Heart left ventricle (tissue), 16 donors: ENCODE measurements at regions of chr12 and their contacts with region 1.

Region 1: DNA sequence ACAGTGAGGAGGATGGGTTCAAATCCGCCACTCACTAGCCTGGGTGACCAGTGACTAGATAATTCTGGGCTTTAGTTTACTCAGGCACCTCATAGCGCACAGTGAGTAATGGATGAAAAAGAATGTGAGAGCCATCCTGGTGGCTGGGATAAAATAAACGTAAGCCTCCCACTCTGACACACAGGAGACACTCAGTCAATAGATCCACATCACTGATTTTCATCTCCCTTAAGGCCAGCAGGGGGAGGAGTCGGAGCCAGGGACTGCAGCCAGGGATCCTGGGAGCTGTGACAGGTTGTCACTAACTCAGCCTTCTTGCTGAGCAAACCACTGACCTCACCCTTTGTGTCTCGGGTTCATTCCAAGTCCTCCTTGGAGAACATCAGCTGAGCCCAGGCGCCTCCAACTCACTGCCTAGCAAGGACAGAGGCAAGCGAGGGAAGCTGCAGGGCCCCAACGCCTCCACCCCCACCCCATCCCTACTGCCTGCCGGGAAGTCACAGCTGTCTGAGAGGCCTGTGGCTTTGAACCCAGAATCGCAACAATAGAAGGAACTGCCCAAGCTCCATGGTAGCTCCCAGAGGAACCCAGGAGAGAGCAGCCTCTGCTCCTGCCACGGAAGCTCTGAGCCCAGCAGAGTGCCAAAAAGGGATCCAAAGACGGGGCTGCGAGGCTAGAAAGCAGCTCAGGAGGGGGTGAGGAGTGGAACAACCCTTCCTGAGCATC is 30.7 kb downstream of the PXN start:
- DNase-seq: peak; percentile 85 to 95 (median 90)
- ATAC-seq: peak; percentile 59 to 83 (median 74)
- H3K4me3 ChIP-seq: peak overlapping the region in 8 of 12 donors; percentile 0 to 18 (median 13)
- H3K27ac ChIP-seq: peak overlapping the region; percentile 81 to 97 (median 92)
- H3K4me1 ChIP-seq: peaks cover 62 to 100% (median 100%) of the 10 kb centered on the region in 12 donors
- H3K27me3 ChIP-seq: no peaks in the 10 kb centered on the region
- CTCF ChIP-seq: peak; percentile 22 to 66 (median 46)
- POLR2A ChIP-seq: peak in 1 of 2 donors; percentile 15

Region 2: DNA sequence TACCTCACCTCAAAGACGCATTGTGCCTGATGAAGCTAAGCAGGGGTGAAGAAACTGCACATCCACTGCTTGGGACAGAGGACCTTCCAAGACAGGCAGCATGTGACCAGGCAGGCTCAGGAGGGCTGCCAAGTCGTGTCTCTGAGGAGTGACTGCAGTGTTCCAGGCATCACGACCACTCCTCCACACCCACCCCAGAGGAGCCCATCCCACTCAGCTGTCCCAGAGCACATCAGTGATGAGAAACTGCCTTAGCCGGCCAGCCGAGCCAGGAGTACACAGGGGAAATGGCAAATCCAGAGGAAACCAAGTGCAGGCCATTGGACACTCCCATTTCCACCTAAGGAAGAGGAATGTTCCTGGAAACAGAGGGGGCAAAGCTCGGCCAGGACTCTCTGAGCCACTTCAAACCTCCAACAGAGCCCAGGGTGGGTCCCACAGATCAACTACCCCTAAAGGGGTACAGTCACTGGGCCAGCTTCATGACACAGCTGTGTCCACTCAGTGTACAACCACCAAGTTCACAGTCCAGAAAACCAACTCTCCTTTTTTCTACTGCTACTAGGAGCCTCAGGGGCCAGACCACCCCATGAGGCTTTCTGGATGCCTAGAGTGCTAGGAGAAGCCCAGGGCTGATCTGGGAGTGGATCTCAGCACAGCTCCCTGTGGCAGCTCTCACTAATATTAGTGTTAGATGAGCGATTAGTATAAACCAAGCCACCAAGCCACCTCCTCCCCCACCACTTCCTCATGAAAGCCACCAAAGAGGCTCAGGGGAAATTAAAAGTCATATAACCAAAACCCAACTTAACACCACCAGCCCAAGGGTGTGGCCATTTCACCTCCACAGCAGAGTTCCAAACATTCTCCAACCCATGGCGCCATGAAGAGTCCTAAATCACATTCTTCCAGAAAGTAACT is 15.3 kb after region 1 on chr12:
- intact Hi-C with region 1: loop called in 1 of 10 experiments (anchors 2 kb)
- DNase-seq: peak; percentile 81 to 91 (median 89)
- ATAC-seq: peak; percentile 78 to 87 (median 80)
- H3K4me3 ChIP-seq: peak overlapping the region in 11 of 12 donors; percentile 12 to 50 (median 40)
- H3K27ac ChIP-seq: peak overlapping the region; percentile 69 to 97 (median 86)
- H3K4me1 ChIP-seq: peaks cover 6 to 99% (median 88%) of the 10 kb centered on the region in 12 donors
- H3K27me3 ChIP-seq: no peaks in the 10 kb centered on the region
- CTCF ChIP-seq: no peak
- POLR2A ChIP-seq: no peak